ENCODE measurements at regions of chr2 and their contacts with region 1.

Region 1: DNA sequence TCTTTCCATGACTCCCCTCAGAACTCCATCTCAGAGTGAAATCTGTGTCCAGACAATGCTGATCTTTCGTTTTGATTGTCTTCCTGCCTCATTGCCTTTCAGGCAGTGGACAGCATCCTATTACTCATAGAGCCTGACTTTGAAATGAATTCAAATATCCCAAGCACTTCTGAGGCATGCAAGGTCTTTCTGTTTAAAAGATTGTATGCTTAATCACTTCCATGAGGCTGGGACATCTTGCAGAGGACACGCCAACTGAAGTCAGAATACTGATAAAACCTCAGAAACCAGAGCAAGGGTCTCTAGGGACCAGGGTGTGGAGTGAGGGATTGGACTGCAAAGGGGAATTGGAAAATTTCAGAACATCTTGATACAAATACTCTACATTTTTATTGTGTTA is 836.5 kb upstream of the ID2 start:
- DNase-seq: no peak
- H3K4me3 Mint-ChIP-seq: no peak overlapping the region
- H3K27ac Mint-ChIP-seq: no peak overlapping the region
- H3K4me1 Mint-ChIP-seq: peaks cover 19% of the 10 kb centered on the region
- H3K27me3 Mint-ChIP-seq: peaks cover 5% of the 10 kb centered on the region

Region 2: DNA sequence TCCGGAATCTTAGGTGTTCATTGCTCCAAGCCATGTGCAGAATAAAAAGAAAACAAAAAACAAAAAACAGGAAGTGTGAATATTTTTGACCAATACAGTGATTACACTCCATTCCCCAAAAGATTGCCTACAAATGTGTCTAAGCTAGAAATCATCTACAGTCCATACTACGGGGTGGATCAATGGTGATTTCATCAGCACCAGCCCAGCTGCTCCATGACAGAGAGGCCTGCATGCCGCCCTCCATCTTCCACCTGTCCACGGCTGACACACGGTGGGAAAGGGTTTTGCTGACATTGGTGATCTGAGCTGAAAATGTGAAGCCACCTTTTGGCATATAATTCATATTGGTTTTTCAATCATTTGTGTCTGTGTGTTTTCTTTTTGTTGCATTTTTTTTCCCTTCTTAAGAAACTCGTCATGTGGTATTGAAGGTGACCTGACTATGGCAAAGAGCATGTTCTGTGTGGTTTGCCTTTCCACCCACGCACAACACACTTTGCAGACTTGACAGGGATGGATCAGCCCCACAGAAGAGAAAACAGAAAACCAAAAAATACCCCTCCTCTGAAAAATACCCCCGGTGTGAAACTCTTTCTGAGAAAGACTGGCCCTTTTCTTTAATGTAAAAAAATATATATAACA is 395.0 kb before region 1 on chr2:
- CTCF ChIA-PET with region 1: no interaction called
- intact Hi-C with region 1: no loop called
- DNase-seq: peak; percentile 75
- H3K4me3 Mint-ChIP-seq: peak overlapping the region; percentile 41
- H3K27ac Mint-ChIP-seq: peak overlapping the region; percentile 88
- H3K4me1 Mint-ChIP-seq: peaks cover 66% of the 10 kb centered on the region
- H3K27me3 Mint-ChIP-seq: no peaks in the 10 kb centered on the region

Region 3: GRCh38 chr2:7867867-7868266 is 22.5 kb after region 1 on chr2:
- CTCF ChIA-PET with region 1: no interaction called
- intact Hi-C with region 1: no loop called
- DNase-seq: peak; percentile 29
- H3K4me3 Mint-ChIP-seq: no peak overlapping the region
- H3K27ac Mint-ChIP-seq: no peak overlapping the region
- H3K4me1 Mint-ChIP-seq: no peaks in the 10 kb centered on the region
- H3K27me3 Mint-ChIP-seq: no peaks in the 10 kb centered on the region

Region 4: GRCh38 chr2:7984693-7985353 is 139.5 kb after region 1 on chr2:
- CTCF ChIA-PET with region 1: no interaction called
- intact Hi-C with region 1: loop called (anchors 1 kb)
- DNase-seq: peak; percentile 22
- H3K4me3 Mint-ChIP-seq: peak overlapping the region; percentile 8
- H3K27ac Mint-ChIP-seq: peak overlapping the region; percentile 62
- H3K4me1 Mint-ChIP-seq: peaks cover 20% of the 10 kb centered on the region
- H3K27me3 Mint-ChIP-seq: peaks cover 4% of the 10 kb centered on the region

Measured in activated naive CD4-positive, alpha-beta T cell treated with anti-CD3 and anti-CD28 coated beads for 36 hours (primary cell).